ENCODE measurements at regions of chr11 and their contacts with region 1.

Region 1: DNA sequence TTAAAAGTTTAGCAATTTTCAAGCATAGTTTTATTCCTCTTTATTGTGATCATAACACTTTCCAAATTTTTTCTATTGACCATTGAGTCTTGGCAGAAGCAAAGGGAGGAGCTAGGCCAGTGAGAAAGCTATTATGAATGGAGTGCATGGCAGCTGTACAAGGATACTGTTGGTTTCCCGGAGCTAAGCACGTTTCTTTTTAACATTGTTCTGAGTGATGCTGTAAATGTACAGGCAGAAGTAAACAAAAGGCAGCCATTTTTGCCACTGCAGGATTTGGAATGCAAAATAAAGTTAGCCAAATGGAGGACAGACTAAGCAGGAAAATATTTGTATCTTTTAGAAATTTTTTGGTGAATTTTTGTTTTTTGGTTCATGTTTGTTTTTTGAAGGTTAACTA is 16.2 kb downstream of the CBL start:
- DNase-seq: no peak
- H3K4me3 ChIP-seq: no peak overlapping the region
- H3K27ac ChIP-seq: peak overlapping the region; percentile 16
- H3K4me1 ChIP-seq: peaks cover 28% of the 10 kb centered on the region
- H3K27me3 ChIP-seq: no peaks in the 10 kb centered on the region
- CTCF ChIP-seq: no peak

Region 2: DNA sequence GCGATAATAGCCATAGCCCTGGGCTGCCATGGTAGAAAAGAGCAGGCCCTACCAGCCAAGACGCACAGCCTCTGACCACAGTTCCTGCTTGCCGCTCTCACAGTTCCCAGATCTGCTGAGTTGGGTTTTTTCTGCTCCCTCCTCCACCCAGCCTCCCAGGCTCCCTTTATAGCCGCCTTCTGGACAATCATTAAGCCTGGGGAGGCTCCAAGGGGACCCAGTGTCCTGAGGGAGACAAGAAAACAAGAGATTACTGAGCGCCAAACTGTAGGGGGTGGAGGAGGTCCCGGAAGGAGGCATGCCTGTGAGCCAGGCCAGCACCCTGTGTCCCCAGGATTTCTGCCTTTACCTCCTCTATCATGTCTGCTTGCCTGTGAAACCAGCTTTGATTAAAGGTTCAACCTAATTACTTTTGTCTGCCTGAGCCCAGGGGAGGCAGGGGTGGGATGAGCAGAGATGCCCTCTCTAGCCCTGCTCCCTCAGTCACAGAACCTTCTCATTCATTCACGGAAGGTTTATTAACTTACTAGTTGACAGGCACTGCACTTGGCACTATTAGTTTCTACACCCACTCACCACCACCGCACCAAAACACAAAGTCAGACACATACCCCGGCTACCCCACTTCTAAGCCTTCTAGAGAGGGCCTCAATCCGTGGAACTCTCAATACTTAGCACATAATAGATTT is 192.8 kb before region 1 on chr11:
- CTCF ChIA-PET with region 1: no interaction called
- POLR2A ChIA-PET with region 1: no interaction called
- intact Hi-C with region 1: no loop called
- DNase-seq: peak in 1 of 2 experiments; percentile 15
- H3K4me3 ChIP-seq: peak overlapping the region; percentile 80
- H3K27ac ChIP-seq: no peak overlapping the region
- H3K4me1 ChIP-seq: peaks cover 14% of the 10 kb centered on the region; the same call in 1 of the 2 replicates
- H3K27me3 ChIP-seq: no peaks in the 10 kb centered on the region
- CTCF ChIP-seq: no peak

Region 3: DNA sequence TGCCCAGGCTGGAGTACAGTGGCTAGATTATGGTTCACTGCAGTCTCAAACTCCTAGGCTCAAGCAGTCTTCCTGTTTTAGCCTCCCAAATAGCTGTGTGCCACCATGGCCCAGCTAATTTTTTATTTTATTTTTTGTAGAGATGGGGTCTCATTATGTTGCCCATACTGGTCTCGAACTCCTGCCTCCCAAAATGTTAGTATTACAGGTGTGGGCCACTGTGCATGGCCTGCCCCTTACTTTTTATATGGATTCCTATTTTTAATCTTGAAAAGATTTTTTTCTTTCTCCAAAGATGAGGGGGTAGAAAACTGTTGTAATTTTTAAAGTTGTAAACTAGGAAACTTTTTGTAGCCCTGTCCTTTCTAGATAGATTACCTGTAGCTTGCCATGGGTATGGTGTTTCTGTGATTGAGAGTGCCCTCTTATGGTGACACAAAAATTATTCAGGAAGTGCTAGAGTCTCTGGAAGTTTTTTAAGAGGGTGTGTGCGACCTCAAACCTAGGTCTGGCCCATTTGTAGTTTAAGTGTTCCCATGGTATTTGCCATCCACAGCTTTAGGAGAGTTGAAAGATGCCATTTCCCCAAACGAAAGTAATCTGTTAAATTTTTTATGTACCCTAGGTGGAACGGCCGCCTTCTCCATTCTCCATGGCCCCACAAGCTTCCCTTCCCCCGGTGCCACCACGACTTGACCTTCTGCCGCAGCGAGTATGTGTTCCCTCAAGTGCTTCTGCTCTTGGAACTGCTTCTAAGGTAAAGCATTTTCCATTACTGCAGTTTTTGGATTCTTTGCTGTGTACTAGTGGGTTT is 62.2 kb after region 1 on chr11:
- CTCF ChIA-PET with region 1: interaction called, 13 read pairs
- POLR2A ChIA-PET with region 1: interaction called, 6 read pairs
- intact Hi-C with region 1: no loop called
- DNase-seq: peak in 1 of 2 experiments; percentile 52
- H3K4me3 ChIP-seq: no peak overlapping the region
- H3K27ac ChIP-seq: no peak overlapping the region
- H3K4me1 ChIP-seq: no peaks in the 10 kb centered on the region
- H3K27me3 ChIP-seq: no peaks in the 10 kb centered on the region
- CTCF ChIP-seq: peak; percentile 71